ENCODE measurements at regions of chr2 and their contacts with region 1.

Region 1: DNA sequence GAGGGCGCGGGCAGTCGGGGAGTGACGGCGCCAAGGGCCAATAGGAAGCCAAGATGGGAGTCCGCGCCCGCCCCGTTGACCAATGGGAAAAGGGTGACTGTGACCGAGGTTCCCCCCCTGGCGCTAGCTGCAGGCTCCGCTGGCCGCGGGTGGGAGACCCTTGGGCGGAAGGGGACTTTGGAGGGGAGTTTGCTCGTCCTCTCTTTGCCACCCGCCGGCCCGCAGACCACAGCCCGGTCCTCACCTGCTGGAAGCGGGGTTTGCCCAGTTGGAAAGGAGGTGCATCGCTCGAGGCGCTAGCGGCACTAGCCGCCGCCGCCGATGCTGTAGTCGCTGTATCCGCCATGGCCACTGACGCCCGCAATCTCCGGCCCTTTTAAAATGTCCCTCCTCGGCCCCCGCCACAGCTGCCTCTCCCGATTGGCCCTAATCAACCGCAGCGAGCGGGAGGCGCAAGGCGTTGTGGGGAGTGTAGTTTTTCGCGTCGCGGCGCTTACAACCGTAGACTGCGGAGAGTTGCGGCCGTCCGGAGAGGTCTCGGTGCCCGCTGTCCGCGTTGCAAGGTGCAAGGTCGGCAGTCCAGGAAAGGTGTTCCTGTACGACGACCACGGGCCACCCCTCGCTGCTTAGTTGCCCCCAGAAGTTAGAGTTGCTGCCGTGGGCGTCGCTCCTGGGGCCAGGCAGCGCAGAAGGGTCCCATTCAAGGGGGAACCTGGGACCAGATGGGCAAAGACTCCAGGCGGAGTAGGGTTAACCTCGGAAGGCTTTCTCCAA is at the start of gene SFXN5:
- DNase-seq: peak; percentile 85 to 98 (median 90)
- ATAC-seq: peak; percentile 93
- H3K4me3 ChIP-seq: peak within 1 kb of the TSS; percentile 98
- H3K4me3 Mint-ChIP-seq: peak within 1 kb of the TSS; percentile 82 to 98 (median 93)
- H3K27ac ChIP-seq: peak within 1 kb of the TSS; percentile 81
- H3K27ac Mint-ChIP-seq: peak within 1 kb of the TSS; percentile 86 to 96 (median 94)
- H3K4me1 ChIP-seq: peaks cover 5 to 7% of the 10 kb centered on the region in 2 donors
- H3K4me1 Mint-ChIP-seq: peaks cover 14 to 39% (median 26%) of the 10 kb centered on the region in 7 donors
- H3K27me3 ChIP-seq: no peaks in the 10 kb centered on the region
- H3K27me3 Mint-ChIP-seq: peaks cover 0 to 18% (median 0%) of the 10 kb centered on the region in 5 donors
- total RNA-seq, gene SFXN5: 8.8 to 17.4 (median 10.9) TPM

Region 2: DNA sequence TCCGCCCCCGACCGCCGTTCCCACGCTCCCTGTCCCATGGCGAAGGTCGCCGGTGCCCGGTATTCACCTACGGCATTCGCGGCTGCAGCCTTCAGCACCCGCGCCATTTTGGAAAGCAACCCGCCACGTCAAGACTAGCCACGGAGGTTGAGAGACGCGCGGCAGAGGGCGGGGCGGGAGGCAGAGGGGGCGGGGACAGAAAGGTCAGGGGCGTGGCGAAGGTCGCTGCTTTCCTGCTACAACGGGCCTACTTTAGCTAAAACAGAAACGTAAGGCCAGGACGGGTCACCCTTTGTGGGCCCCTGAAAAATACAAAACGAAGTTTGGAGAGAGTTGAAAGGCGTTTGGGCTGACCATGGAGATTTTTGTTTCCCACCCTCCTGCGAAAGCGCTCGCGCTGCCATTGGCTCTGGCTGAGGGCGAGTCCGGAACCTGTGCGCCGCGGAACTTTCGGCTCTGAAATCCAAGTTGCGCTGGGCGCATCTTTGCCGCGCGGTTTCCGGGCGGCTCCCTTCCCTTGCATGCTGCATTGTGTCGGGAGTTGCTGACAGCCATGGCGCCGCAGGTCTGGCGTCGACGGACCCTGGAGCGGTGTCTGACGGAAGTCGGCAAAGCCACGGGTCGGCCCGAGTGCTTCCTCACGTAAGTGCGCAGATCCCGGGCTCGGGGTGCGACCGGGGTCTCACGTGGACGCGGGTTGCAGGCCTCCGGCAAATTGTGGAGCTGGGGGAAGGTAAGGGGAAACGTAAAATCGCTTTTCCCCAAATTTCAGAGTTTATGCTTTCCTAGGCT is 1941.2 kb before region 1 on chr2 and contains the starts of genes MCEE and MPHOSPH10:
- CTCF ChIA-PET with region 1: no interaction called
- POLR2A ChIA-PET with region 1: no interaction called
- intact Hi-C with region 1: loop called in 1 of 2 experiments (anchors 1 kb)
- DNase-seq: peak; percentile 81 to 91 (median 89)
- ATAC-seq: peak; percentile 95
- H3K4me3 ChIP-seq: peak within 1 kb of the TSS; percentile 74
- H3K4me3 Mint-ChIP-seq: no peak within 1 kb of the TSS
- H3K27ac ChIP-seq: peak within 1 kb of the TSS; percentile 87
- H3K27ac Mint-ChIP-seq: peak within 1 kb of the TSS in 1 of 9 donors; percentile 45
- H3K4me1 ChIP-seq: peaks cover 21 to 22% of the 10 kb centered on the region in 2 donors
- H3K4me1 Mint-ChIP-seq: peaks cover 5 to 33% (median 26%) of the 10 kb centered on the region in 7 donors
- H3K27me3 ChIP-seq: no peaks in the 10 kb centered on the region
- H3K27me3 Mint-ChIP-seq: no peaks in the 10 kb centered on the region
- total RNA-seq, gene MCEE: 11.6 to 27.9 (median 16.4) TPM
- total RNA-seq, gene MPHOSPH10: 28.2 to 58.9 (median 43.8) TPM

Region 3: GRCh38 chr2:72887754-72888437 is 183.7 kb before region 1 on chr2:
- CTCF ChIA-PET with region 1: no interaction called
- POLR2A ChIA-PET with region 1: no interaction called
- intact Hi-C with region 1: loop called in 1 of 2 experiments (anchors 5 kb)
- DNase-seq: peak in 8 of 9 donors; percentile 10 to 63 (median 28)
- ATAC-seq: peak; percentile 68
- H3K4me3 ChIP-seq: peak overlapping the region; percentile 43
- H3K4me3 Mint-ChIP-seq: peak overlapping the region; percentile 71 to 86 (median 80)
- H3K27ac ChIP-seq: no peak overlapping the region
- H3K27ac Mint-ChIP-seq: no peak overlapping the region
- H3K4me1 ChIP-seq: peaks cover 0 to 7% of the 10 kb centered on the region in 2 donors
- H3K4me1 Mint-ChIP-seq: peaks cover 0 to 15% (median 9%) of the 10 kb centered on the region in 7 donors
- H3K27me3 ChIP-seq: peaks cover 0 to 6% of the 10 kb centered on the region in 2 donors
- H3K27me3 Mint-ChIP-seq: peaks cover 35 to 72% (median 70%) of the 10 kb centered on the region in 5 donors

Region 4: DNA sequence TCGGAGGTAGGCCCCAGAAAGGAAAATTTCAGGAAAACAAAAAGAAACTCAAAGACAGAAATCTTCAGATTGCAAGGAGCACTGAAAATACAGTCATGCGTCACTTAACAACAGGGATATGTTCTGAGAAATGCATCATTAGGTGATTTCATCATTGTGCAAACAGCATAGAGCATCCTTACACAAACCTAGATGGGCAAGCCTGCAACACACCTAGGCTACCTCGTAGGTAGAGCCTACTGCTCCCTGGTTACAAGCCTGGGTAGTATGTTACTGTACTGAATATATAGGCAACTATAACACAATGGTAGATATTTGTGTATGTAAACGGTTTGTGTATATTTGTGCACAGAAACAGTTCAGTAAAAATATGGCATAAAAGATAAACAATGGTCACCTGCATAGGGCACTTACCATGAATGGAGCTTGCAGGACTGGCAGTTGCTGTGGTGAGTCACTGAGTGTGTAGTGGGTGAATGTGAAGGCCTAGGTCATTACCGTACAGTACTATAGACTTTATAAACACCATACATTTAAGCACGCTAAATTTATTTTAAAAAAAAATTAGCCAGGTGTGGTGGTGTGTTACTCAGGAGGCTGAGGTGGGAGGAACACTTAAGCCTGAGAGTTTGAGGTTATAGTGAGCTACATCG is 33.5 kb before region 1 on chr2:
- CTCF ChIA-PET with region 1: no interaction called
- POLR2A ChIA-PET with region 1: no interaction called
- intact Hi-C with region 1: loop called in 1 of 2 experiments (anchors 2 kb)
- DNase-seq: no peak
- ATAC-seq: no peak
- H3K4me3 ChIP-seq: no peak overlapping the region
- H3K4me3 Mint-ChIP-seq: no peak overlapping the region
- H3K27ac ChIP-seq: no peak overlapping the region
- H3K27ac Mint-ChIP-seq: no peak overlapping the region
- H3K4me1 ChIP-seq: no peaks in the 10 kb centered on the region
- H3K4me1 Mint-ChIP-seq: peaks cover 0 to 3% (median 0%) of the 10 kb centered on the region in 7 donors
- H3K27me3 ChIP-seq: no peaks in the 10 kb centered on the region
- H3K27me3 Mint-ChIP-seq: no peaks in the 10 kb centered on the region

Region 5: DNA sequence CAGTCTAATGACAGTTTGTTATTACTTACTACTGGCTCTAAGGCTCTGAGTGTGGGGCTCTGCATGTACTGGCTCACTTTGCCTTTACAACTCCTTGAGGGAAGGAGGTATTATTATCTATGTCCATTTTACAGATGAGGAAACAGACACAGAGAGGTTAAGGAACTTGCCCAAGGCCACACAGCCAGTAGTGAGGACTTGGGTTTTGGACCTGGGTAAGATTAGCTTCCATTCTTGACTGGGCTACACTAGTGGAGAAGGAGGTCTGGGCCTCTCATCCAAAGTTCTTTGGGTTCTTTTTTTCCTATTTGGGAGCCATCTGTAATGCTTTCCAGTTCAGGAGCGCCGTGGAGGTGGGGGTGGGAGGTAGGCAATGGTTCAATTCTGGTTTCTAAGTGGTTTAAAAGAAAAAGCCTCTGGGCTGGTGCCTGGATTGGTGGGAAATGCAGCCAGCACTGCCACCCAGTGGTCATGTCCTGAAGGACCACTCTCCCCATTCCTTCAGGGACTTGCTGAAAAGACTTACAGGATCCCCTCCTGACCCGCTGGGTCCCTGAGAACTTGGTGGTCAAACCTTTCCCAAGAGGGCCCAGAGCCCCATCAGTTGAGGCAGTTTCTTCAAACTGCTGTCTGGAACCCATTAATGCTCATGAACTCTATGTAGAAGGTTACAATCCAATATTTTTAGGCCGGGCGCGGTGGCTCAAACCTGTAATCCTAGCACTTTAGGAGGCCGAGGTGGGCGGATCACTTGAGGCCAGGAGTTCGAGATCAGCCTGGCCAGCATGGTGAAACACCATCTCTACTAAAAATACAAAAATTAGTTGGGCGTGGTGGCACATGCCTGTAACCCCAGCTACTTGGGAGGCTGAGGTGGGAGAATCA is 92.2 kb after region 1 on chr2:
- CTCF ChIA-PET with region 1: no interaction called
- POLR2A ChIA-PET with region 1: no interaction called
- intact Hi-C with region 1: loop called (anchors 5 kb)
- DNase-seq: peak; percentile 31 to 66 (median 54)
- ATAC-seq: peak; percentile 88
- H3K4me3 ChIP-seq: no peak overlapping the region
- H3K4me3 Mint-ChIP-seq: no peak overlapping the region
- H3K27ac ChIP-seq: no peak overlapping the region
- H3K27ac Mint-ChIP-seq: no peak overlapping the region
- H3K4me1 ChIP-seq: no peaks in the 10 kb centered on the region
- H3K4me1 Mint-ChIP-seq: peaks cover 0 to 1% (median 0%) of the 10 kb centered on the region in 7 donors
- H3K27me3 ChIP-seq: no peaks in the 10 kb centered on the region
- H3K27me3 Mint-ChIP-seq: peaks cover 0 to 16% (median 11%) of the 10 kb centered on the region in 5 donors

Region 6: GRCh38 chr2:73284296-73285158 is 213.0 kb after region 1 on chr2 and contains the start of gene FBXO41:
- CTCF ChIA-PET with region 1: no interaction called
- POLR2A ChIA-PET with region 1: no interaction called
- intact Hi-C with region 1: loop called in 1 of 2 experiments (anchors 1 kb)
- DNase-seq: peak; percentile 43 to 79 (median 61)
- ATAC-seq: peak; percentile 81
- H3K4me3 ChIP-seq: peak within 1 kb of the TSS; percentile 69
- H3K4me3 Mint-ChIP-seq: peak within 1 kb of the TSS; percentile 72 to 91 (median 85)
- H3K27ac ChIP-seq: peak within 1 kb of the TSS; percentile 61
- H3K27ac Mint-ChIP-seq: peak within 1 kb of the TSS in 7 of 9 donors; percentile 32 to 87 (median 58)
- H3K4me1 ChIP-seq: peaks cover 12 to 14% of the 10 kb centered on the region in 2 donors
- H3K4me1 Mint-ChIP-seq: peaks cover 6 to 26% (median 19%) of the 10 kb centered on the region in 7 donors
- H3K27me3 ChIP-seq: no peaks in the 10 kb centered on the region
- H3K27me3 Mint-ChIP-seq: peaks cover 0 to 34% (median 14%) of the 10 kb centered on the region in 5 donors
- total RNA-seq, gene FBXO41: 13.2 to 19.6 (median 17.6) TPM

Region 7: GRCh38 chr2:74178201-74179062 is 1106.9 kb after region 1 on chr2 and contains the start of gene MOB1A:
- CTCF ChIA-PET with region 1: no interaction called
- POLR2A ChIA-PET with region 1: no interaction called
- intact Hi-C with region 1: loop called in 1 of 2 experiments (anchors 5 kb)
- DNase-seq: peak; percentile 94 to 98 (median 97)
- ATAC-seq: peak; percentile 97
- H3K4me3 ChIP-seq: peak within 1 kb of the TSS; percentile 89
- H3K4me3 Mint-ChIP-seq: peak within 1 kb of the TSS; percentile 86 to 95 (median 91)
- H3K27ac ChIP-seq: peak within 1 kb of the TSS; percentile 97
- H3K27ac Mint-ChIP-seq: peak within 1 kb of the TSS; percentile 82 to 95 (median 90)
- H3K4me1 ChIP-seq: peaks cover 25 to 37% of the 10 kb centered on the region in 2 donors
- H3K4me1 Mint-ChIP-seq: peaks cover 32 to 46% (median 35%) of the 10 kb centered on the region in 7 donors
- H3K27me3 ChIP-seq: no peaks in the 10 kb centered on the region
- H3K27me3 Mint-ChIP-seq: no peaks in the 10 kb centered on the region
- total RNA-seq, gene MOB1A: 113 to 185 (median 140) TPM